ENCODE measurements at regions of chr17 and their contacts with region 1.

Region 1: DNA sequence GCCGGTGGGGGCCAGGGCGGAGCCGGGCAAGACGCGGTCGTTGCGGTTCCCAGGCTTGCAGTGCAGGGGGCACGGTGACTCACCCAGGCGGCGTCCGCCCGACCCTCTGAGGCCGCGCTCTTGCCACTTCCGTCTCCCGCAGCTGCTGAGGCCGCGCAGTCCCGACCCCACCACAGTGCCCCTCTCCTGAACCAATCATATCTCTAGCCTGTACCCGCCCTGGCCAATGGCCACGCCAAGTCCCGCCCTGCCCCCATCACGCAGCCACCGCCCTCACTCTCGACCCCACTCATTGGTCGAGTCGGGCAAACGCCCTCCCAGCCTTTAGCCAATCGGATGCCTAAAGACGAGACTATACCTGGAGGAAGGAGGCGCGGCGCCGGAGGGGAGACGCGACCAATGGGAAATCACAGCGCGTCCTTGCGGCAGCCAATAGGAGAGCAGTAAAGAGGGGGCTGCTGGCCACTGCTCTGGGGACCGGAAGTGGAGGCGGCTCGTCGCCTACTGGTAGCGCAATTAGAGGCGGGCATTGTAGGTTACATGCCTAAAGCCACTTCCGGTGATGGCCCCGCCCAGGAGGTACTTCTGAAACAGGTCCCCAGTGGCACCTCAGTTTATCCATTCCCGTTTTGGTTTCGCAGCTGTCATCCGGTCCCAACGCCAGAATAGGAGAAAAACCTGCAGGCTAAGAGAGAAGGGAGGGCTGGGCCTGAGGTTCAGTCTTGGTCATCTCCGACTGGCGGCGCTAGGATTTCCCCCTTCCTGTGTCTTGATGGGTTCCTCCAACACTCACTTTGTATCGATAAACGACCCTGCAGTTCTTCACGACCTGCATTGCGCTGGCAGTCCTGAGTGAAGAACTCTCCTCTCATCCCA is 3.5 kb upstream of the MTMR4 start:
- DNase-seq: peak; percentile 99 to 100 (median 100)
- H3K4me3 ChIP-seq: peak overlapping the region; percentile 71
- H3K27ac ChIP-seq: peak overlapping the region; percentile 87 to 96
- H3K4me1 ChIP-seq: peaks cover 14% of the 10 kb centered on the region
- H3K27me3 ChIP-seq: no peaks in the 10 kb centered on the region
- CTCF ChIP-seq: no peak
- EP300 ChIP-seq: peak; percentile 64
- POLR2A ChIP-seq: peak; percentile 58

Region 2: GRCh38 chr17:57902800-57903759 is 614.9 kb before region 1 on chr17:
- intact Hi-C with region 1: no loop called
- DNase-seq: peak in 2 of 5 donors; percentile 37 to 44
- H3K4me3 ChIP-seq: no peak overlapping the region
- H3K27ac ChIP-seq: no peak overlapping the region
- H3K4me1 ChIP-seq: peaks cover 18% of the 10 kb centered on the region
- H3K27me3 ChIP-seq: no peaks in the 10 kb centered on the region
- CTCF ChIP-seq: no peak
- EP300 ChIP-seq: no peak
- POLR2A ChIP-seq: no peak

Region 3: GRCh38 chr17:58565780-58566189 is 47.8 kb after region 1 on chr17:
- intact Hi-C with region 1: no loop called
- DNase-seq: no peak
- H3K4me3 ChIP-seq: no peak overlapping the region
- H3K27ac ChIP-seq: no peak overlapping the region
- H3K4me1 ChIP-seq: no peaks in the 10 kb centered on the region
- H3K27me3 ChIP-seq: no peaks in the 10 kb centered on the region
- CTCF ChIP-seq: no peak
- EP300 ChIP-seq: no peak
- POLR2A ChIP-seq: no peak

Region 4: DNA sequence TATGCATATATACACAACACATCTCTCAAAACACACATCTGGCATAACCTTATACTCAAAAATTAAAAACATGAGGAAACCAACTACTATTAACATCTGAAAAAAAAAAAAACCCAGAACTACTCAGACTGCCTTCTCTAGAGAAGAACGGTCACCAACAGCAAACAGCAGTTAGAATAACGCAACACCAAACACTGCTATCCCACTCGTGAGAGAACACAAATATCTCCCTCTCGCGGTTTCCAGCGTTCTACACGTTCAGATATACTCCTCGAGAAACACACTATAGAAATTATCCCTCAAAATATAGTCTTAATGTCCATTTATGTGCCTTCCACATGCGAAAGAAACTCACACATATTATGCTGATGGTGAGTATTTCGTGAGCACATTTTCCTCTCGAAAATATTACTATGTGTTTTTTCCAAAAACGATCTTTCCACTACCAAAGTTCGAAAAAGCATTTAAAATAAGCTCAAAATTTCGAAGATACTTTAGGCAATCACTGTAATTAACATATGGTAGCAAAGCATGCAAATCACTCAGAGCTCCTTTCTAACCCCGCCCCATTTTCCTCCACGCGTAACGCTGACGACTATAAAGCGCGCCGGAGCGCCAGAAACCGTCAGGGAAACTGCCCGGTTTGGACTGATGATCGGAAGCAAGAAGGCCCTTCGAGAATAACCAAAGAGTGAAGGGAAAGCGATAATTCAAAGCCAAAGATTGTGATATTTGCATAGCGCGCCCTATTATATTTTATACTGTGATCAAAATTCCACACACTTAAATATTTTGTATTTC is 113.8 kb after region 1 on chr17:
- intact Hi-C with region 1: loop called in 1 of 4 experiments (anchors 5 kb)
- DNase-seq: peak; percentile 92 to 96 (median 95)
- H3K4me3 ChIP-seq: peak overlapping the region; percentile 49
- H3K27ac ChIP-seq: peak overlapping the region; percentile 79 to 83
- H3K4me1 ChIP-seq: no peaks in the 10 kb centered on the region
- H3K27me3 ChIP-seq: no peaks in the 10 kb centered on the region
- CTCF ChIP-seq: peak in 2 of 3 donors; percentile 18 to 19
- EP300 ChIP-seq: no peak
- POLR2A ChIP-seq: peak; percentile 81

Region 5: DNA sequence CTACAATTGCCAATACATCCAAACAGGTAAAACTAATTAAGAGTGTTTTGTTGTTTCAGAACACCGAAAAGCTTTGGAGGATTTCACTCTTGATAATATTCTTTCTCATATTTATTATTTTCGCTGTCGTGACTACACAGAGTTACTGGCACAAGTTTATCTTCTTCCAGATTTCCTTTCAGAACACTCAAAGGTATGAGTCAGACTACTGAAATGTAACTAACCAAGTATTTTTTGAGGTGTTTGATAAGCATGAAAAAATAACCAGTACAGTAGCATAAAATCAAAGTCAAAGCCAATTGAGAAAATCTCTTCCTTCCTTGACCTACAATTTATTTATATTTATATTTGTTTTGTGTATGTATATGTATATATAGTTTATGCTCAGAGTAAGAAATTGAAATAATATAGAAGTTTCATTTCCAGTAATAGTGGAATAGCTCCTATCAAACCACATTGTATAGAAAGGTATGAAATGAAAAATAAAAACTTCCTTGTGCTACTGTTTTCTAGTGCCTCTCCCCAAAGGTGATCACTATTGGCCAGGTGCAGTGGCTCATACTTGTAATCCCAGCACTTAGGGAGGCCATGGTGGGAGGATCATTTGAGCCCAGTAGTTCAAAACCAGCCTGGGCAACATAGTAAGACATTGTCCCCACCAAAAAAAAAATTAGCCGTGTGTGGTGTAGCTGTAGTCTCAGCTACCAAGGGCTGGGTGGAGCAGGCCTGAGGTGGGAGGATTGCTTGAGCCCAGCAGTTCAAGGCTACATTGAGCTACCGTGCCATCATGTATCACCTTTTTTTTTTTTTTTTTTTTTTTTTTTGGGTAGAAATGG is 185.4 kb after region 1 on chr17:
- intact Hi-C with region 1: loop called in 1 of 4 experiments (anchors 10 kb)
- DNase-seq: no peak
- H3K4me3 ChIP-seq: no peak overlapping the region
- H3K27ac ChIP-seq: no peak overlapping the region
- H3K4me1 ChIP-seq: no peaks in the 10 kb centered on the region
- H3K27me3 ChIP-seq: no peaks in the 10 kb centered on the region
- CTCF ChIP-seq: no peak
- EP300 ChIP-seq: no peak
- POLR2A ChIP-seq: no peak

Region 6: GRCh38 chr17:59004338-59005111 is 486.6 kb after region 1 on chr17:
- intact Hi-C with region 1: loop called in 2 of 4 experiments (anchors 5 to 10 kb)
- DNase-seq: peak; percentile 28 to 69 (median 58)
- H3K4me3 ChIP-seq: no peak overlapping the region
- H3K27ac ChIP-seq: no peak overlapping the region
- H3K4me1 ChIP-seq: peaks cover 2% of the 10 kb centered on the region
- H3K27me3 ChIP-seq: no peaks in the 10 kb centered on the region
- CTCF ChIP-seq: peak; percentile 81 to 92 (median 87)
- EP300 ChIP-seq: no peak
- POLR2A ChIP-seq: no peak

Region 7: GRCh38 chr17:59707114-59707970 is 1189.4 kb after region 1 on chr17 and contains the starts of genes PTRH2 and VMP1:
- intact Hi-C with region 1: loop called in 1 of 4 experiments (anchors 5 kb)
- DNase-seq: peak; percentile 96 to 98 (median 97)
- H3K4me3 ChIP-seq: peak within 1 kb of the TSS; percentile 88
- H3K27ac ChIP-seq: peak within 1 kb of the TSS; percentile 60 to 81
- H3K4me1 ChIP-seq: peaks cover 8% of the 10 kb centered on the region
- H3K27me3 ChIP-seq: no peaks in the 10 kb centered on the region
- CTCF ChIP-seq: no peak
- EP300 ChIP-seq: no peak
- POLR2A ChIP-seq: peak; percentile 76
- total RNA-seq, gene PTRH2: 11.9 to 28.2 (median 20.0) TPM
- total RNA-seq, gene VMP1: 101 to 667 (median 162) TPM